A549 (cell line): ENCODE measurements at regions of chr14 and their contacts with region 1.

Region 1: GRCh38 chr14:67919259-67920032 is 99.9 kb downstream of the RAD51B start:
- DNase-seq: no peak
- ATAC-seq: no peak; a peak in 1 of 6 replicates
- H3K4me3 ChIP-seq: no peak overlapping the region
- H3K27ac ChIP-seq: no peak overlapping the region
- H3K4me1 ChIP-seq: no peaks in the 10 kb centered on the region
- CTCF ChIP-seq: no peak
- EP300 ChIP-seq: no peak
- POLR2A ChIP-seq: no peak
- RAD21 ChIP-seq: no peak

Region 2: GRCh38 chr14:67816326-67817002 is 103.0 kb before region 1 on chr14 and contains the start of gene ZFYVE26:
- CTCF ChIA-PET with region 1: no interaction called
- POLR2A ChIA-PET with region 1: no interaction called
- DNase-seq: peak; percentile 93 to 96
- ATAC-seq: peak; percentile 91 to 95
- H3K4me3 ChIP-seq: peak within 1 kb of the TSS; percentile 78
- H3K27ac ChIP-seq: peak within 1 kb of the TSS; percentile 80 to 88
- H3K4me1 ChIP-seq: peaks cover 20% of the 10 kb centered on the region
- CTCF ChIP-seq: no peak
- EP300 ChIP-seq: no peak
- POLR2A ChIP-seq: peak; percentile 54
- RAD21 ChIP-seq: no peak
- polyA plus RNA-seq, gene ZFYVE26: 11.3 and 14.1 TPM in 2 replicates

Region 3: DNA sequence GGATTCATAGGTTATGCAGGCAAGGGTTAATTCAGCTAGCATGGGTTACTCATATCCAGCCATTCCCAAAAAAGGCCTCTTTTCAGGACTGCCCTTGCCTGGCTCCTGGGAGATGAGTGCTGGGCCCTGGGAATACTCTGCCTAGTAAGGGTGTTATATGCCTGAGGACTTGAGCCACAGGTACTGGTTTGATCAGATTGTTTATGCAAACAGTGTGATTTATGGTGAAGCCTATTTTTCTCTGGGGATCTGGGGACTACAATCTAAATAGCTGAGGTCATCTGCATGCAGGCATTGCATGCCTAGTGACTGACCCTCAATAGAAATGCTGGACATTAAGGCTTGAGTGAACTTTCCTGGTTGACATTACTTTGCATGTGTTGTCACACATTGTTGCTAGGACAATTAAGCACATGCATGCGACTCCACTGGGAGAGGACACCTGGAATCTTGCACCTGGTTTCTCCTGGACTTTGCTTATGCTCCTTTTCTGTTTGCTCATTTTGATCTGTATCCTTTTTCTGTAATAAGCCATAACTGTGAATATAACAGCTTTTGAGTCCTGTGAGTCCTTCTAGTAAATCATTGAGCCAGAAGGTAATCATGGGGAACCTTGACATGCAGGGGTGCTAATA is 26.9 kb before region 1 on chr14:
- CTCF ChIA-PET with region 1: no interaction called
- POLR2A ChIA-PET with region 1: no interaction called
- DNase-seq: no peak
- ATAC-seq: no peak
- H3K4me3 ChIP-seq: no peak overlapping the region
- H3K27ac ChIP-seq: no peak overlapping the region
- H3K4me1 ChIP-seq: peaks cover 1% of the 10 kb centered on the region; the same call in 1 of the 3 replicates
- CTCF ChIP-seq: no peak
- EP300 ChIP-seq: no peak
- POLR2A ChIP-seq: no peak
- RAD21 ChIP-seq: no peak

Region 4: DNA sequence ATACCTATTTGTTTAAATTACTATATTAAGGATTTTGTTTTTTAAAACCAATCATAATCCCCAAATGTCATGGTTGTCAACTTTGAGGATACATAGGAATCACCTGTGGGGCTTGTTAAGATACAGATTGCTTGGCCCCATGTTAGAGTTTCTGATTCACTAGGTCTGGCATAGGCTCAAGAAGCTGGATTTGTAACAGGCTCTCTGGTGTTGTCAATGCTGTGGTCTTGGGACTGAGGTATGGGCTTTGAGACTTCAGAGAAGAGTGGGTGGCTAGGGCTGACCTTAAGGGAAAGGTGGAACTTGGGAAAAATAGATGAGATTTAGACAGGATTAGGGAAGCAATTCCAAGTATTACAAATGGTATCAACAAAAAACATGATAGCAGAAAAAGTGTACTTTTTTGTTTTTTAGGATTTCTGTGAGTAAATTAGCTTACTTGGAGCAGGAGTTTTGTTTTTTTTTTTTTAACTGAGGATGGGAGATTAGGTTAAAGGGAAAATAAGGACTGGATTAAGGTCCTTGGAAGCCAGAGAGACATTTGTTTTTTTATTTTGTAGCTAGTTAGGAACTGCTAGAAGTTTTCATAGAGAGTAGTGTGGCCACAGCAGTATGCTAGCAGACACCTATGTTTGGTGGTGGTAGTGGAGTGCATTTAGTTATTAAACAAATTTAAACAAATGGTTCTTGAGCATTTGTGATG is 11.2 kb before region 1 on chr14:
- CTCF ChIA-PET with region 1: interaction called, 10 read pairs
- POLR2A ChIA-PET with region 1: no interaction called
- DNase-seq: no peak
- ATAC-seq: no peak
- H3K4me3 ChIP-seq: no peak overlapping the region
- H3K27ac ChIP-seq: no peak overlapping the region
- H3K4me1 ChIP-seq: no peaks in the 10 kb centered on the region
- CTCF ChIP-seq: no peak
- EP300 ChIP-seq: no peak
- POLR2A ChIP-seq: no peak
- RAD21 ChIP-seq: no peak

Region 5: DNA sequence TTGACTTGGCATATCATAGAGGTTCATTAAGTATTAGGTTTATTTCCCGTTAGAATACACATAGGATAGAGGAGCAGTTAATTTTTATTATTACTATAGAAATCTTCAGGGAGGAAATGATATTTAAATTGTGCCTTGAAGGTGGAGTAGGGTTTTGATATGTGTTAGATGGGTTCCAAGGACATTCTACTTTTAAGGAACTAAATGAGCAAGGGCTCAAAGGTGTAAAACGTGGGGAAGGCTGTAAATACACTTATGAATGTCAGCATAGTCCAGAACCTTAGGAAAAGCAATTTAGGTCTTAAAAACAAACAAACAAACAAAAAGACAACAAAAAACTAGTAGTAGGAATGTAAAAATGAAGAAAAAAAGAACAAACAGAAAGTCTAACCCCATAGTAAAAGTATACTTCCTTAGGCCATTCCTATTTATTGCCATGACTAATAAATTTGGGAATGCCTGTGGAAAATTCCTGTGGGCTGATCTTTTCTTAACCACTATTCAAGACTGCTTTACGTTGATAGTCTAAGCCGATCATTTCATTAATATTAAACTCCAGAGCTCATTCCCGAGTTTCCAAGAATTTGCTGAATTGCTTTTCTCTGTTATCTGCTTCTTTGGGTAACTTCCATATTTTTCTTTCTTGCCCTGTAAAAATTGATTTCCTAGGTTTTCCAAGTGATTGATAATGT is 80.4 kb after region 1 on chr14:
- CTCF ChIA-PET with region 1: no interaction called
- POLR2A ChIA-PET with region 1: no interaction called
- DNase-seq: peak; percentile 45 to 71
- ATAC-seq: peak; percentile 82 to 94; a peak in 5 of 6 replicates
- H3K4me3 ChIP-seq: peak overlapping the region; percentile 21; the same call in 1 of the 3 replicates
- H3K27ac ChIP-seq: peak overlapping the region; percentile 76 to 80
- H3K4me1 ChIP-seq: peaks cover 29% of the 10 kb centered on the region
- CTCF ChIP-seq: no peak
- EP300 ChIP-seq: no peak
- POLR2A ChIP-seq: no peak
- RAD21 ChIP-seq: 0 out of 5 replicates have a peak, but pooled peaks have one; percentile 5 to 14

Region 6: DNA sequence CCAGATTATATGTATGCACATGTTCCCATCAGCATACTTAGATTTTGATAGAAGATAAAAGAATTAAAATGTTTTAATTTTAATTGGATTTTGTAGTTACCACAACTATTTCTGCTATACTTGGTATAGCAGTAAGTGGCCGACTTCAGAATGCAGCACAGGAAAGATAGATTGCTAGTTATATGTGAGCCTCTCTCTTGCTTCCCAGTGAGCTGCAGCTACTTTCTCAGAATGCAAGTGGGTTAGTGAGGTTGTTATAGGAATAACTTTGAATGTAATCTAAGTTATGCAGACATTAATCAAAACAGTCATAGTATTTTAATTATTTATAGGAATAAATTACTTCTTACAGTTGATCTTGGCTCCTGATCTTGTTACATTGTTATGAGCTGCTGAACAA is 140.8 kb after region 1 on chr14:
- CTCF ChIA-PET with region 1: no interaction called
- POLR2A ChIA-PET with region 1: interaction called, 10 read pairs
- DNase-seq: no peak
- ATAC-seq: no peak
- H3K4me3 ChIP-seq: no peak overlapping the region
- H3K27ac ChIP-seq: no peak overlapping the region
- H3K4me1 ChIP-seq: no peaks in the 10 kb centered on the region
- CTCF ChIP-seq: no peak
- EP300 ChIP-seq: no peak
- POLR2A ChIP-seq: no peak
- RAD21 ChIP-seq: no peak